Activated T-helper 2 cell treated with anti-CD3 and anti-CD28 coated beads, Interferon-gamma antibody, Interleukin-2, Interleukin-4, amounts not matched to agents 10 μg/mL and 5 μg/mL and 100 μg/mL, durations not matched to agents 14 hours and 24 hours and 36 hours (primary cell): ENCODE measurements at regions of chr9 and their contacts with region 1.

Region 1: DNA sequence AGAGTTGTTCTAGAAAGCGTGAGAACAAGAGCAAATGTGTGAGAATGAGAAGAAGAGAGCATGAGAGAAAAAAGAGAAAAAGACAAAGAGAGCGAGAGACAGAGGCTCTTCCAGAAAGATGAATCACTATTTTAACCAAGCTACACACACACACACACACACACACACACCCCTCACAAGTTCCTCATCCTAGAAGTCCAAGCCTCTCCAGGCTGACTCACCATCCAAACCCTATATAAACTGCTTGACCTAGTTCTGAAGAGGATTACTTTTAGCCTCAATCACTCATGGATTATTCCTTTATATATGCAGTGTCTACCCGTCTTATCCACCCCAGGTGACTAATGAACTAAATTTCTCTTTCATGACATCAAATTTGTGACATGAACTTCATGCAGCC is 37.6 kb downstream of the C9orf57 start:
- DNase-seq: no peak
- H3K4me3 Mint-ChIP-seq: no peak overlapping the region
- H3K27ac Mint-ChIP-seq: no peak overlapping the region
- H3K4me1 Mint-ChIP-seq: peaks cover 8% of the 10 kb centered on the region
- H3K27me3 Mint-ChIP-seq: peaks cover 5% of the 10 kb centered on the region

Region 2: GRCh38 chr9:71806901-71807307 is 215.9 kb before region 1 on chr9:
- intact Hi-C with region 1: loop called (anchors 1 kb)
- DNase-seq: peak; percentile 45
- H3K4me3 Mint-ChIP-seq: no peak overlapping the region
- H3K27ac Mint-ChIP-seq: no peak overlapping the region
- H3K4me1 Mint-ChIP-seq: peaks cover 8% of the 10 kb centered on the region
- H3K27me3 Mint-ChIP-seq: peaks cover 9% of the 10 kb centered on the region

Region 3: DNA sequence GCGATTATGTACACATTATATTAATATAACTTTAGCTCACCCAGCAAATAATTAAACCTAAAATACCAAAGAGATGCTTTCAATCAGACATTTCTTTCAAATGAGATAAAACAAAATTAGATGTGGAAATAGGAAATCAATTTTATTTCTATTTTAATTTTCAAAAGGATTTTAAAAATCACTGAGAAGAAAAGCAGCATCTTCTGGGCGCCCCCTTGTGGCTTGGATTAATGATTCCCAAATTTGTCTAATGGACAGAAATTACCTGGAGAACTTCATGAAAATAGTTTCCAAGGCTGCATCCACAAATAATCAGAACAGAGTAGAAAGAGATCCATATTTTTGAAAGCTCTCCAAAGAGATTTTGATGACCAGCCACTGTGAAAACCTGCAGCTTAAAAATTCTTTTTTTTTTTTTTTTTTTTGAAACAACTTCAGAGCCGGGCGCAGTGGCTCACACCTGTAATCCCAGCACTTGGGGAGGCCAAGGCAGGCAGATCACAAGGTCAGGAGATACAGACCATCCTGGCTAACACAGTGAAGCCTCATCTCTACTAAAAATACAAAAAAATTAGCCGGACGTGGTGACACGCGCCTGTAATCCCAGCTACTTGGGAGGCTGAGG is 203.6 kb before region 1 on chr9:
- intact Hi-C with region 1: loop called (anchors 5 kb)
- DNase-seq: no peak
- H3K4me3 Mint-ChIP-seq: no peak overlapping the region
- H3K27ac Mint-ChIP-seq: no peak overlapping the region
- H3K4me1 Mint-ChIP-seq: peaks cover 29% of the 10 kb centered on the region
- H3K27me3 Mint-ChIP-seq: peaks cover 7% of the 10 kb centered on the region